ENCODE measurements at regions of chr6 and their contacts with region 1.

Region 1: GRCh38 chr6:42970871-42971612 is 7.9 kb downstream of the PEX6 start:
- DNase-seq: no peak
- ATAC-seq: peak; percentile 46 to 62 (median 54)
- H3K4me3 ChIP-seq: no peak overlapping the region
- H3K27ac ChIP-seq: peak overlapping the region; percentile 27
- H3K4me1 ChIP-seq: peaks cover 10% of the 10 kb centered on the region
- H3K27me3 ChIP-seq: no peaks in the 10 kb centered on the region
- CTCF ChIP-seq: no peak

Region 2: GRCh38 chr6:42907336-42907735 is 63.7 kb before region 1 on chr6:
- intact Hi-C with region 1: loop called in 1 of 2 experiments (anchors 5 kb)
- DNase-seq: no peak
- ATAC-seq: no peak
- H3K4me3 ChIP-seq: no peak overlapping the region
- H3K27ac ChIP-seq: no peak overlapping the region
- H3K4me1 ChIP-seq: peaks cover 4% of the 10 kb centered on the region
- H3K27me3 ChIP-seq: peaks cover 0 to 15% (median 0%) of the 10 kb centered on the region in 3 donors
- CTCF ChIP-seq: no peak

Region 3: GRCh38 chr6:42929821-42930360 is 41.2 kb before region 1 on chr6:
- intact Hi-C with region 1: loop called in 1 of 2 experiments (anchors 5 kb)
- DNase-seq: no peak
- ATAC-seq: peak in 2 of 4 donors; percentile 4 to 10
- H3K4me3 ChIP-seq: peak overlapping the region; percentile 91
- H3K27ac ChIP-seq: peak overlapping the region; percentile 89
- H3K4me1 ChIP-seq: peaks cover 13% of the 10 kb centered on the region
- H3K27me3 ChIP-seq: no peaks in the 10 kb centered on the region
- CTCF ChIP-seq: no peak